Activated B cell treated with CpG ODN at 0.5 μM for 24 hours (primary cell): ENCODE measurements at regions of chr5 and their contacts with region 1.

Region 1: DNA sequence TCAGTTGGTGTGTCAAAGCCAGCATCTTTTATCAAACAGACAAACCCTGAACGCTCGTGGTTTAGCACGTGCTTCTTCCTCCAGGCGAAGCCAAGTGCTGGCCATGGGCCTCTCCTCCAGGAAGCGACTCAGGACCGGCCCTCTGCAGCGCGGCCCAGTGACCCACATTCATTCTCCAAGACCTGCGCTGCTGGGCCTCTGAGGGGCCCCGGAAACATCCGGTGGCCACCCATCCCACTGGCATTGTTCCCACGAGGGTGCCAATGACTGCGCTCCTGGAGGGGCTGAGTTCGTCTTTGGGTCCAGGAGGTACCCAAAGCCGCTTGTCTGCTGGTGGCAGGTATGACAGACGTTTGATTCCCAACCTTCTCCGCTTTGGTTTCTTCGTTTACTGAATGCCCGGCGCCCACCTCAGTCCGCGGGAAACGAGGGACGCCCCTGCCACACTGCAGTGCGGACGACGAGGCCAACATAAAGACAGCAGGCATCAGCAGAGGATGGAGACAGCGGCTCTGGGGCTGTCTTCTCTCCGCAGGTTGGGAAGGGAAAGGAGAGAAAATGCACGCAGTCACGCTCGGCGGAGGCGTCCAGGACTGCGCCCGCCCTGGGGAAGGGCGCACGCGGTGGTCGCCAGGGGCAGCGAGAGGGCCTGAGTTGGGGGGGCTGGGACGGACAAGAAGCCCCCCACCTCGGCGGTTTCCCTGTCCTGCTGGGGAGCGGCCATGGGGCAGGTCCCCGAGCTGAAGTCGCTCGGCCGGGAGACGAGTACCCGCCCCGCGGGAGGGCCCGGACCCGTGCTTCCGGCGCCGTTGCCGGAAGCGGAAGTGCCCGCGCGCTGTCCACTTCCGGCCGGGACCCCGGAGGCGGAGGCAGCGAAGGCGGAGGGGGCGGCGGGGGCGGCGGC is at the start of gene EXOC3:
- DNase-seq: peak; percentile 81
- ATAC-seq: peak; percentile 91
- H3K4me3 Mint-ChIP-seq: peak within 1 kb of the TSS; percentile 94
- H3K27ac Mint-ChIP-seq: peak within 1 kb of the TSS; percentile 90
- H3K4me1 Mint-ChIP-seq: peaks cover 36% of the 10 kb centered on the region
- H3K27me3 Mint-ChIP-seq: no peaks in the 10 kb centered on the region
- CTCF ChIP-seq: no peak
- total RNA-seq, gene EXOC3: 75.9 and 79.6 TPM in 2 replicates

Region 2: DNA sequence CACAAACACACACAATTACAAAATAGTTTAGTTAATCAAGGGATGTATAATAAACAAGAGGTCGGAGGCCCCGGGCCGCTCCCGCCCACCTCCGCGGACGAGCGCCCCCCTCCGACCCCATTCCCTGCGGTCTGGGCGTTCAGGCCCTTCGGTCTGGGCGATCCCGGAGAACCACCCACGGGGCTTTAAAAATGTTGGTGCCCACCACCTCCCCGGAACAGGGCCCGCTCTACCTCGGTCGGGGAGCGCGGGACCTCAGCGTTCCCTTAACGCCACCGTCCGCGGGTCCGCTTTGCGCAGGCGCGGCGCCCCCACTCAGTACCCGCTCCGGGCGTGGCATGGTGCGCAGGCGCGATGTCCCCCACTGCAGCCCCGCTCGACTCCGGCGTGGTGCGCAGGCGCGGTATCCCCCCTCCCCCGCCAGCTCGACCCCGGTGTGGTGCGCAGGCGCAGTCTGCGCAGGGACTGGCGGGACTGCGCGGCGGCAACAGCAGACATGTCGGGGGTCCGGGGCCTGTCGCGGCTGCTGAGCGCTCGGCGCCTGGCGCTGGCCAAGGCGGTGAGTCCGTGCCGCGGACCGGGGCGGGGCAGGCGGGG is 224.6 kb before region 1 on chr5 and contains the starts of genes CCDC127 and SDHA:
- CTCF ChIA-PET with region 1: no interaction called
- POLR2A ChIA-PET with region 1: no interaction called
- intact Hi-C with region 1: loop called (anchors 5 kb)
- DNase-seq: peak; percentile 99
- ATAC-seq: peak; percentile 81
- H3K4me3 Mint-ChIP-seq: peak within 1 kb of the TSS; percentile 91
- H3K27ac Mint-ChIP-seq: peak within 1 kb of the TSS; percentile 85
- H3K4me1 Mint-ChIP-seq: peaks cover 65% of the 10 kb centered on the region
- H3K27me3 Mint-ChIP-seq: no peaks in the 10 kb centered on the region
- CTCF ChIP-seq: no peak
- total RNA-seq, gene CCDC127: 5.7 and 6.4 TPM in 2 replicates
- total RNA-seq, gene SDHA: 90.5 and 95.7 TPM in 2 replicates

Region 3: DNA sequence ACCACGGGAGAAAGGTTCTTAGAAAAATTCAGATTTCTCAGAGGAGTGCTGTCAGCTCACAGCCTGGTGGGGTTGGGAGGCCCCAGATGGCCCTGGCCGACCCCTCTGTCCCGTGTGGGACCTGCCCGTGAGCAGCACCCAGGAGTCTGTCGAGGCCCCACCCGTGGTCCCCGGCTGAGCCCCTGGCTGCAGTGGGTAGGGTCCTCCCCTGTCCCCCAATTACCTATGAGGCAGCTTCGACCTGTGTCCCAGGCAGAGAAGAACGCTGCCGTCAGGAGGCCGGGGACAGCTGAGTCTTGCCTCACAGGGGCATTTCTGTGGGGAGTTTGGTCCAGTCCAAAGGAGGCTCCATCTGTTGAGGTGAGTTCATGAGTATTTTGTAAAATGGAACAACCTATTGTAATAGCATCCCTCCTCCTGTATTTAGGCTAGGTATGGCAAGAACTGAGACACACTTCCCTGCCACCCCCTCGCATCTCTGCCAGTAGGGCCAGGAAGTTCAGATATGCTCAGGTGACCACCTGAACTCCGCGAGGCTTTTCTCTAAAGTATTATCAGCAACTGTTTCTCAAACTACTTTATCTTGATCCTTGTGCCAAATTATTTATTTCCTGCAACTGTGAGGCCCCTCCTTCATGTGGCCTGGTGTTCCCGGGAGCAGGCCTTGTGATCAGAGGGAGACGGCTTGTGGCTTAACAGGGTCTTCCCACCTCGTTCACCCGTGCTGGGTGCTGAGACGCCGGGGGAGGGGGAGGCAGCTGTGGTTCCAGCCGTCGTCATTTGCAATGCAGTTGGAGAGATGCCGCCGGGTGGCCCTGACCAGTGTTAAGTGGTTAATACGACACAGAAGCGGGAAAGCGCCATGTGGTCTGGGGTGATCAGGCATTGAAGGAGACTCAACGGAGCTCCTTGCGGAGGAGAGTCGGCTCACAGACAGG is 119.4 kb before region 1 on chr5:
- CTCF ChIA-PET with region 1: no interaction called
- POLR2A ChIA-PET with region 1: no interaction called
- intact Hi-C with region 1: no loop called
- DNase-seq: no peak
- ATAC-seq: no peak
- H3K4me3 Mint-ChIP-seq: peak overlapping the region; percentile 58
- H3K27ac Mint-ChIP-seq: no peak overlapping the region
- H3K4me1 Mint-ChIP-seq: peaks cover 15% of the 10 kb centered on the region
- H3K27me3 Mint-ChIP-seq: peaks cover 29% of the 10 kb centered on the region
- CTCF ChIP-seq: no peak

Region 4: DNA sequence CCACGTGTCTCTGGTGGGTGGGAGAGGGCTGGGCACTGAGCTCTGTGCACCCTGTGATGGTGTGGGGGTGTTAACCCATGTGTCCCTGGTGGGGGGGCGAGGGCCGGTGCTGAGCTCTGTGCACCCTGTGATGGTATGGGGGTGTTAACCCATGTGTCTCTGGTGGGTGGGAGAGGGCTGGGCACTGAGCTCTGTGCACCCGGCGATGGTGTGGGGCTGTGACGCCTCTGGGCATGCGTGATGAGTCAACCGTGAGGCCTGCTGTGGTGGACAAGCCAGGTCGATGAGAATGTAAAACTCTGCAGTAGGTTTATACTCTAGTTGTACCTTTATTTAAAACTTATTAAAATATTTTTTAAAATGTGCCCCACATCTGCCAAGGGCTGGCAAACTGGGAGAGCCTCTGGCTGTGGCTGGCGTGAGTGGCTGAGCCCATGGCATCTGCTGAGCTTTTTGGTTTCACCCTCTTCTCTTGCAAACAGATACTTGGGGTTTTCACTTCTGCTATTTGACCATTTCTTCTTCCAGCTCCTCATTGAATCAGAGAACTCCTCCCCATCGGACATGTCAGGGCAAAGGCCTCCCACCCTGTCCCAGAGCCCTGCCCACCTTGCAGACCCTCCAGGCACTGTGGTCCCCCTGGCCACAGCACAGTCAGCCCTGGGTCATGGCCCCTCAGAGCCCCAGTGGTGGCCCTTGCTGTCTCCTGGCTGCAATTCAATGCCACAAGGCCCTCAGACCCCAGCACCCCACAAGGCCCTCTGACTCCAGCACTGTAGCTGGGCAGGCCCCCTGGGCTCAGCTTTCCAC is 18.1 kb before region 1 on chr5:
- CTCF ChIA-PET with region 1: interaction called, 4 read pairs
- POLR2A ChIA-PET with region 1: no interaction called
- intact Hi-C with region 1: loop called (anchors 2 kb)
- DNase-seq: peak; percentile 17
- ATAC-seq: peak; percentile 80
- H3K4me3 Mint-ChIP-seq: no peak overlapping the region
- H3K27ac Mint-ChIP-seq: peak overlapping the region; percentile 37
- H3K4me1 Mint-ChIP-seq: peaks cover 16% of the 10 kb centered on the region
- H3K27me3 Mint-ChIP-seq: peaks cover 3% of the 10 kb centered on the region
- CTCF ChIP-seq: no peak

Region 5: DNA sequence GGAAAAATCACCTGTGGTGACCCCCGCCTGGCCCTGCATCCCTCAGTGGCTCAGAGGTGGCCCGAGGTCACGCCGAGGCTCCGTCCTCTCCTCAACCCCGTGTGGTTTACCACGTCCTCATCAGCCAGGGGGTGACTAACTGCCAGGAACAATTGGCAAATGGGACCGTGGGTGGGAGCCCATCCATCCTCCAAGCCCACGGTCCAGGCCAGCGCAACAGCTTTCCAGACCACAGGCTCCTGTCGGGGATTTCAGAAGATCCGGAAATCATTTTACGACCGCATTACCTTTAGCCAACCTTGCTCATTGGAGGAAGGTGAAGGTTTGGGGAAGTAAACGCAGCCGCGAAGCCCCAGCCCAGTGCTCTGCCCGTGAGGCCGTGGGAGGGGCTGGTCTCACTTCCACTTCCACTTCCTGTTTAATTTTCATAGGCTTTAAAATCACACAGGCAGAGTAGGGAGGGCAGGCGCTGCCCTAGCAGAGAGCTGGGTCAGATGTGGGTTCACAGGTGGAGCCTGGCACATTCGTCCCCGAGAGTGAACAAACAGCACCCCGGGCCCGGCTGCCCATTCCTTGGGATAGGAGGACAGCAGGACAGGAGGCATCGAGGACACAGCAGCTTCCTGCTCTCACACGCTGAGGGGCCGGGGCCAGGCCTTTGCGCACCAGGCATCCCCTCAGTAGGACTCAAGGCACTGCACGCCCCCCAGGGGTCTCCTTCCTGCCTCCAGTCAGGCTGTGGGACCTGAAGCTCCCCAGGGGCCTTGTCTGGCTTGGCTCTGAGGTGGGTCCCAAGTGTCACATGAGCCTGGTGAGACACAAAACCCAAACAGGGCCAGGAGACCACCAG is 101.5 kb after region 1 on chr5:
- CTCF ChIA-PET with region 1: interaction called, 4 read pairs
- POLR2A ChIA-PET with region 1: no interaction called
- intact Hi-C with region 1: loop called (anchors 5 kb)
- DNase-seq: peak; percentile 64
- ATAC-seq: peak; percentile 96
- H3K4me3 Mint-ChIP-seq: peak overlapping the region; percentile 65
- H3K27ac Mint-ChIP-seq: peak overlapping the region; percentile 85
- H3K4me1 Mint-ChIP-seq: peaks cover 36% of the 10 kb centered on the region
- H3K27me3 Mint-ChIP-seq: peaks cover 20% of the 10 kb centered on the region
- CTCF ChIP-seq: no peak

Region 6: GRCh38 chr5:671459-672328 is 229.1 kb after region 1 on chr5:
- CTCF ChIA-PET with region 1: interaction called, 3 read pairs
- POLR2A ChIA-PET with region 1: interaction called, 3 read pairs
- intact Hi-C with region 1: loop called (anchors 5 kb)
- DNase-seq: peak; percentile 50
- ATAC-seq: peak; percentile 84
- H3K4me3 Mint-ChIP-seq: no peak overlapping the region
- H3K27ac Mint-ChIP-seq: no peak overlapping the region
- H3K4me1 Mint-ChIP-seq: peaks cover 13% of the 10 kb centered on the region
- H3K27me3 Mint-ChIP-seq: peaks cover 8% of the 10 kb centered on the region
- CTCF ChIP-seq: no peak